Naive thymus-derived CD4-positive, alpha-beta T cell (primary cell): ENCODE measurements at regions of chr6 and their contacts with region 1.

Region 1: DNA sequence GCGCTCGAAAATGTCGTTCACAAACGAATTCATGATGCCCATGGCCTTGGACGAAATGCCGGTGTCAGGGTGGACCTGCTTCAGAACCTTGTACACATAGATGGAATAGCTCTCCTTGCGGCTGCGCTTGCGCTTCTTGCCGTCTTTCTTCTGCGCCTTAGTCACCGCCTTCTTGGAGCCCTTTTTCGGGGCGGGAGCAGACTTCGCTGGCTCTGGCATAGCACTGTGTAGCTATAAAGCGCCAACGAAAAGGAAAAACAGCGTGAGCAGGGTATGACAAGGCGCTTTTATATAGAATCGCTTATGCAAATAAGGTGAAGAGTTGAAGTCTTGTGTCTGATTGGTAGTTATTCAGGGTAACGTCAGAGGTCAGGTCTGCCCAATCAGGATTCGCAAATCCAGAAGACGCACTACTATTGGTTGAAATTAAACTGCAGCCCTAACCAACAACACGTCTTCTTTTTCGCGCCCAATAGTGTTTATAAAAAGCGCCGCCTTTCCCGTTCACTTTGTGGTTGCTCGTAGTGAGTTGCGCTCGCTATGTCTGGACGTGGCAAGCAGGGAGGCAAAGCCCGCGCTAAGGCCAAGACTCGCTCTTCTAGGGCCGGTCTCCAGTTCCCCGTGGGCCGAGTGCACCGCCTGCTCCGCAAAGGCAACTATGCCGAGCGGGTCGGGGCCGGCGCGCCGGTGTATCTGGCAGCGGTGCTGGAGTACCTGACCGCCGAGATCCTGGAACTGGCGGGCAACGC is 114.8 kb upstream of the PRSS16 start:
- DNase-seq: peak; percentile 73 to 99 (median 97)
- ATAC-seq: peak; percentile 93
- H3K4me3 ChIP-seq: peak overlapping the region; percentile 90
- H3K4me3 Mint-ChIP-seq: no peak overlapping the region
- H3K27ac ChIP-seq: peak overlapping the region; percentile 81
- H3K27ac Mint-ChIP-seq: no peak overlapping the region
- H3K4me1 ChIP-seq: peaks cover 10 to 18% of the 10 kb centered on the region in 2 donors
- H3K4me1 Mint-ChIP-seq: peaks cover 6 to 49% (median 21%) of the 10 kb centered on the region in 7 donors
- H3K27me3 ChIP-seq: no peaks in the 10 kb centered on the region
- H3K27me3 Mint-ChIP-seq: no peaks in the 10 kb centered on the region

Region 2: DNA sequence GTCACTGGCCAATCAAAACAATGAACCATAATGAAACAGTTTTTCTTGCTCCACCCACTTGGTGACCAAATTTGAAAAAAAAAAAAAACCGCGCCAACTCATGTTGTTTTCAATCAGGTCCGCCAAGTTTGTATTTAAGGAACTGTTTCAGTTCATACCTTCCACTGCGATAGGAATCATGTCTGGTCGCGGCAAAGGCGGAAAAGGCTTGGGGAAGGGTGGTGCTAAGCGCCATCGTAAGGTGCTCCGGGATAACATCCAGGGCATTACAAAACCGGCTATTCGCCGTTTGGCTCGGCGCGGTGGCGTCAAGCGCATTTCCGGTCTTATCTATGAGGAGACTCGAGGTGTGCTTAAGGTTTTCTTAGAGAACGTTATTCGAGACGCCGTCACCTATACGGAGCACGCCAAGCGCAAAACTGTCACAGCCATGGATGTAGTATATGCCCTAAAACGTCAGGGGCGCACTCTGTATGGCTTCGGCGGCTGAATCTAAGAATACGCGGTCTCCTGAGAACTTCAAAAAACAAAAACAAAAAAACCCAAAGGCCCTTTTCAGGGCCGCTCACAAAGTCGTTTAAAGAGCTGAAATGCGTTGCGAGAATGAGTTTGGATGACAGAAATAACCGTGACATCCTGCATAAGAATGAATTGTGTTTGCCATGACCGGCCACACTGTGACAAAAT is 1028.8 kb before region 1 on chr6:
- CTCF ChIA-PET with region 1: no interaction called
- POLR2A ChIA-PET with region 1: no interaction called
- intact Hi-C with region 1: loop called in 1 of 2 experiments (anchors 5 kb)
- DNase-seq: peak; percentile 83 to 96 (median 95)
- ATAC-seq: peak; percentile 94
- H3K4me3 ChIP-seq: peak overlapping the region; percentile 40
- H3K4me3 Mint-ChIP-seq: peak overlapping the region; percentile 81 to 97 (median 89)
- H3K27ac ChIP-seq: peak overlapping the region; percentile 75
- H3K27ac Mint-ChIP-seq: peak overlapping the region; percentile 96 to 100 (median 98)
- H3K4me1 ChIP-seq: peaks cover 4 to 12% of the 10 kb centered on the region in 2 donors
- H3K4me1 Mint-ChIP-seq: peaks cover 7 to 25% (median 22%) of the 10 kb centered on the region in 7 donors
- H3K27me3 ChIP-seq: no peaks in the 10 kb centered on the region
- H3K27me3 Mint-ChIP-seq: peaks cover 0 to 3% (median 0%) of the 10 kb centered on the region in 5 donors

Region 3: DNA sequence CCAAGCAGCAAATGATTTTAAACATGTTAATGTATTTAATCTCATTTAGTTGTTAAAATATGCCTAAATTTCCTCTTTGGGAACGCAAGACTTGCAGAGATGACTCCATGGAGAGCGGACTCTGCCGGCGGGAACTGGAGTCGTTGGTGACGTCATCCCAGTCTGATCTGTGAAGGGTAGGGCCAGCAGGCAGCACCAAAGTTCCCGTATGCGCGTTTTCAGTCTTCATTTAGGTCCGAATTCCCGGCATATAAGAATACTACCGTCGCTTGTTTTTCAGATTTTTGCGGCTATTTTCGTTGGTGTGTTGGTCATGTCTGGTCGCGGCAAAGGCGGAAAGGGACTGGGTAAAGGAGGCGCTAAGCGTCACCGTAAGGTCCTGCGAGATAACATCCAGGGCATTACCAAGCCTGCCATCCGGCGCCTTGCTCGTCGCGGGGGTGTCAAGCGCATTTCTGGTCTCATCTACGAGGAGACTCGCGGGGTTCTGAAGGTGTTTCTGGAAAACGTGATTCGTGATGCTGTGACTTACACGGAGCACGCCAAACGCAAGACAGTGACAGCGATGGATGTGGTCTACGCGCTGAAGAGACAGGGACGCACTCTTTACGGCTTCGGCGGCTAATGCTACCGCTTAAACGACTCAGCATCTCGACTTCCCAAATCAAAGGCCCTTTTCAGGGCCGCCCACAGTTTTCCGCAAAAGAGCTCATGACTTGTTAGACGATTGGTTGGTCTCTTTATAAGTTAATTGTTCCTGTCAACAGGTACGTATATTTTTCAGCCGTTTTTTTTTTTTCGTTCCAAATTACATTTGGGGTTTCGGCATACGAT is 928.2 kb before region 1 on chr6:
- CTCF ChIA-PET with region 1: interaction called, 3 read pairs
- POLR2A ChIA-PET with region 1: interaction called, 61 read pairs
- intact Hi-C with region 1: loop called in 1 of 2 experiments (anchors 2 kb)
- DNase-seq: peak; percentile 67 to 95 (median 89)
- ATAC-seq: peak; percentile 72
- H3K4me3 ChIP-seq: peak overlapping the region; percentile 77
- H3K4me3 Mint-ChIP-seq: no peak overlapping the region
- H3K27ac ChIP-seq: peak overlapping the region; percentile 90
- H3K27ac Mint-ChIP-seq: no peak overlapping the region
- H3K4me1 ChIP-seq: peaks cover 20 to 23% of the 10 kb centered on the region in 2 donors
- H3K4me1 Mint-ChIP-seq: peaks cover 9 to 36% (median 26%) of the 10 kb centered on the region in 7 donors
- H3K27me3 ChIP-seq: no peaks in the 10 kb centered on the region
- H3K27me3 Mint-ChIP-seq: peaks cover 0 to 5% (median 0%) of the 10 kb centered on the region in 5 donors

Region 4: DNA sequence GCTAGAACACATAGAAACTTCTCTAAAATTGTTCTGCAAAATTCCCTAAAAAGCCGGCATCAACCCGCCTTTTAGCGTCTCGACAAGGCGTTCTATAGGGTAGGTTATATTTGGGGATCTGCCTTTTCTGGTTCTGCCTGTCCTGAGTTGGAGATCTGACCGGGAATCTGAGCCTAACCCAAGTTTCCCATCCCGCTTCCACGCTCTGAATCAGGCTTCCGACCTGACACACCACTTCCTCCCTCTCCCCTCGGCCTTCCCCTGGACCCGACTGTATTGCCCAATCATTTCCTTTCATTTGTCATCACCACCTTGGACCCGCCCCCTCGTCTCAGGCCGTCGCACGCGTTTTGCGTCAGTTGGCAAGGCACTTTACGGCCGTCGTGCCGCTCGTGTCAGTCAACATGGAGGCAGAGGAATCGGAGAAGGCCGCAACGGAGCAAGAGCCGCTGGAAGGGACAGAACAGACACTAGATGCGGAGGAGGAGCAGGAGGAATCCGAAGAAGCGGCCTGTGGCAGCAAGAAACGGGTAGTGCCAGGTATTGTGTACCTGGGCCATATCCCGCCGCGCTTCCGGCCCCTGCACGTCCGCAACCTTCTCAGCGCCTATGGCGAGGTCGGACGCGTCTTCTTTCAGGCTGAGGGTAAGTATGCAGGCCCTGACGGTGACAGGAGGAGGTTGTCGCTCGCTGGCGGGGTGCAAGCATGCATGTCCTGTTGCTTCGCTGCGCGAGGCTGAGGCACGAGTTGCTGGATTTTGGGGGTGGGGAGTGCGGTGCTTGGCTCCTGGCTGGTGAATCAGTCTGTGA is 535.9 kb before region 1 on chr6 and contains the start of gene ABT1:
- CTCF ChIA-PET with region 1: no interaction called
- POLR2A ChIA-PET with region 1: interaction called, 3 read pairs
- intact Hi-C with region 1: loop called in 1 of 2 experiments (anchors 5 kb)
- DNase-seq: peak; percentile 87 to 96 (median 95)
- ATAC-seq: peak; percentile 95
- H3K4me3 ChIP-seq: peak within 1 kb of the TSS; percentile 81
- H3K4me3 Mint-ChIP-seq: no peak within 1 kb of the TSS
- H3K27ac ChIP-seq: peak within 1 kb of the TSS; percentile 89
- H3K27ac Mint-ChIP-seq: peak within 1 kb of the TSS in 1 of 9 donors; percentile 92
- H3K4me1 ChIP-seq: peaks cover 17 to 22% of the 10 kb centered on the region in 2 donors
- H3K4me1 Mint-ChIP-seq: peaks cover 5 to 20% (median 10%) of the 10 kb centered on the region in 7 donors
- H3K27me3 ChIP-seq: peaks cover 8 to 14% of the 10 kb centered on the region in 2 donors
- H3K27me3 Mint-ChIP-seq: peaks cover 3 to 28% (median 16%) of the 10 kb centered on the region in 5 donors
- total RNA-seq, gene ABT1: 23.3 to 37.5 (median 35.0) TPM

Region 5: DNA sequence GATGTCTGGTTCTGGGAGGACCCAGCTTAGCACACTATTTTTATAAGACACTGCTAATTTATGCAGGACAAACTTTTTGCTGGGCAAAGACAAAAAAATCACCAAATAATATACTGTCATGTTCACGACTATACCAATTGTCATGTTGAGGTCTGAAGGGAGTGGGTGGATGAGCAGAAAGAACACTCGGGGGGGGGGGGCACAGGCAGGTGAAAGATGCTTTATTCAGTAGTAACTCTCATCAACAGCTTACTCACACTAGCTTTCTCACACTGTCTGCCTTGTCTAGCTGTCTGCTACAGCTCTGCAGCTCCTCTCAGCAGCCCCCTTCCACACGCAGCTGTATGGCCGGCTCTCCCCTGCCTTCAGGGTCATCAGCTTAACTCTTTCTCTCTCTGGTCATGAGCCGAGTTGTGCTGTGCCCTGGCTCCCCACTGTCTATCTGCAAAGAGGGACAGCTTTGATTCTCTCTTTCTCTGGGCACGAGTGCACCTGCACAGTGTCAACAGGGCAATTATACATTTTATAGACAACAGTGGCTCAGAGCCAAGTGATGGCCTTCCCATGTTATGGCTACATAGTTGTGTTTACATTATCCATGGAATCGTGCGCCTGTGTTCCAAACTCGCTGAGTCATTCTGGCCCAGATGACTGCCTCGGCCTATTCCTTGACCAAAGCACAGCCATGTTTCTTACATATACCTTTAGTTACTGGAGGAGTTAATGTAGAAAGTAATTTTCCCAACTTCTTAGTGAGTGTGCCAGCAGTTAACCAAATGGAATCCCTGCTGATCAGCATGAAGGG is 72.9 kb before region 1 on chr6:
- CTCF ChIA-PET with region 1: no interaction called
- POLR2A ChIA-PET with region 1: no interaction called
- intact Hi-C with region 1: no loop called
- DNase-seq: no peak
- ATAC-seq: no peak
- H3K4me3 ChIP-seq: no peak overlapping the region
- H3K4me3 Mint-ChIP-seq: no peak overlapping the region
- H3K27ac ChIP-seq: no peak overlapping the region
- H3K27ac Mint-ChIP-seq: no peak overlapping the region
- H3K4me1 ChIP-seq: no peaks in the 10 kb centered on the region
- H3K4me1 Mint-ChIP-seq: no peaks in the 10 kb centered on the region
- H3K27me3 ChIP-seq: no peaks in the 10 kb centered on the region
- H3K27me3 Mint-ChIP-seq: peaks cover 9 to 32% (median 17%) of the 10 kb centered on the region in 5 donors

Region 6: GRCh38 chr6:27076116-27076515 is 56.6 kb before region 1 on chr6:
- CTCF ChIA-PET with region 1: no interaction called
- POLR2A ChIA-PET with region 1: no interaction called
- intact Hi-C with region 1: no loop called
- DNase-seq: no peak
- ATAC-seq: no peak
- H3K4me3 ChIP-seq: no peak overlapping the region
- H3K4me3 Mint-ChIP-seq: no peak overlapping the region
- H3K27ac ChIP-seq: no peak overlapping the region
- H3K27ac Mint-ChIP-seq: no peak overlapping the region
- H3K4me1 ChIP-seq: no peaks in the 10 kb centered on the region
- H3K4me1 Mint-ChIP-seq: peaks cover 0 to 8% (median 7%) of the 10 kb centered on the region in 7 donors
- H3K27me3 ChIP-seq: peaks cover 0 to 11% of the 10 kb centered on the region in 2 donors
- H3K27me3 Mint-ChIP-seq: peaks cover 19 to 54% (median 37%) of the 10 kb centered on the region in 5 donors

Region 7: DNA sequence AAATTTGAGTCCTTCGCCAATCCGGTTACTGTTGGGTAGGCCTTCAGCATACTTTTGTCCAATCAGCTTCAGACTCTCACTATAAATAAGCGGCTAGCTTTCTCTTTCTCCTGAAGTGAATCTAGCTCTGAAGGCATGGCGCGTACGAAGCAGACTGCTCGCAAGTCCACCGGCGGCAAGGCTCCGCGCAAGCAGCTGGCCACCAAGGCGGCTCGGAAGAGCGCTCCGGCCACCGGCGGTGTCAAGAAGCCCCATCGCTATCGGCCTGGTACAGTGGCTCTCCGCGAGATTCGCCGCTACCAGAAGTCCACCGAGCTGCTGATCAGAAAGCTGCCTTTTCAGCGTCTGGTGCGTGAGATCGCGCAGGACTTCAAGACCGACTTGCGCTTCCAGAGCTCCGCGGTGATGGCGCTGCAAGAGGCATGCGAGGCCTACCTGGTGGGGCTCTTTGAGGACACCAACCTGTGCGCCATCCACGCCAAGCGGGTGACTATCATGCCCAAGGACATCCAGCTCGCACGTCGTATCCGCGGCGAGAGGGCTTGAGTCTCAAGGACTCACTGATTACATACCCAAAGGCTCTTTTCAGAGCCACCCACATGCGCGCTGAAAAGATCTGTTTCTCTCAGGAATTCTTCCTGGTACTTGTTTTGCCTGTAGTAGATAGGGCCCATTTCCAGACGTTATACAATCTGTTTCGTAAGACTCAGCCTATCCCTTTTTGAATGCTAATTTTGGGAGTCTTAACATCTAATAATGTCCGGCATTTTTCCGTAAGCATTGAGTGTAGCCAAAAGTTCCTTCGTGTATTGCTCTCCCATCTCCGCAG is 677.4 kb after region 1 on chr6:
- CTCF ChIA-PET with region 1: interaction called, 5 read pairs
- POLR2A ChIA-PET with region 1: interaction called, 114 read pairs
- intact Hi-C with region 1: loop called (anchors 1 kb)
- DNase-seq: peak; percentile 66 to 96 (median 92)
- ATAC-seq: peak; percentile 71
- H3K4me3 ChIP-seq: peak overlapping the region; percentile 76
- H3K4me3 Mint-ChIP-seq: peak overlapping the region; percentile 81 to 97 (median 94)
- H3K27ac ChIP-seq: peak overlapping the region; percentile 86
- H3K27ac Mint-ChIP-seq: peak overlapping the region; percentile 95 to 99 (median 98)
- H3K4me1 ChIP-seq: peaks cover 20 to 42% of the 10 kb centered on the region in 2 donors
- H3K4me1 Mint-ChIP-seq: peaks cover 18 to 82% (median 61%) of the 10 kb centered on the region in 7 donors
- H3K27me3 ChIP-seq: no peaks in the 10 kb centered on the region
- H3K27me3 Mint-ChIP-seq: peaks cover 0 to 9% (median 0%) of the 10 kb centered on the region in 5 donors

Region 8: DNA sequence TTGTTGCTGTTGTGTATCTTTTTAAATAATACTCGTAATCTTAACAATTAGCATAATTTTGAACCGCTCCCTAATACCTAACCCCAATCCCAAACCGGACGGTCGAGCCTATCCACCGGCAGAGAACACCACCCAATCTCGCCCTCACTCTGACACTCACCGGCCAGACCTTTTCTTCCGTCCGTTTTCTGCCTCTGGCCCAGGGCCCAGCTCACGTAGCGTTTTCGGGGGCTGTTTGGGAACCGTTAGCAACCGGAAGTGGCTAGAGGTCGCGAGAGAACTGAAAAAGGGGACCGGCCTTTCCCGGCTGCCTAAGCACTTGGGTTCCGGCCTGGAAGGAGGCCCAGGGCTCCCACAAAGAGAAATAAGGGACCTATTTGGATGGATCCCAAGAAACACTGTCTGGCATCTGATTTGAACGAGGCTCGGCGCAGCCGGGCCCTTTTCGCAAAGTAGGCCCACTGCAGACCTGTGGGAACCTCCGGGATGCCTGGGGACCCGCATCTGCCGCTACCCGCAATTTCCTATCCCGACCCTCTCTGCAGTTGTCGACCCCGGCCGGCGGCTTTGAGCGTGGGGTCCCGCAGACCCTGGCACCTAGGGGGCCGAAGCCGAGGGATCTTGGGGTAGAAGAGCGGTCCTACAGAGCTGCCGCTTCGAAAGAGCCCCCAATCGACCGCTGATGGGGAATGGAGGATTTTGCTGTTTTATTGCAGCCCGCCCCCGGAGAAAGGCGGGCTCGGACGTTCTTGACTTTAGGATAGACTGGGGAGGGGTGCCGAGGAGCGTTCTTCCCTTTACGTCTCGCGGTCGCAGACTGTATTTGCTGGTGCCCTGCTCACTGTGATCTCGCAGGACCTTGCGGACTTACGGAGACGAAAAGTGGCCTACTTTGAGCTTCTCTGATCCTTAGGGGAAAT is 1004.1 kb after region 1 on chr6:
- CTCF ChIA-PET with region 1: no interaction called
- POLR2A ChIA-PET with region 1: no interaction called
- intact Hi-C with region 1: loop called in 1 of 2 experiments (anchors 5 kb)
- DNase-seq: peak; percentile 45 to 72 (median 56)
- ATAC-seq: peak; percentile 56
- H3K4me3 ChIP-seq: peak overlapping the region; percentile 89
- H3K4me3 Mint-ChIP-seq: peak overlapping the region; percentile 91 to 100 (median 94)
- H3K27ac ChIP-seq: peak overlapping the region; percentile 98
- H3K27ac Mint-ChIP-seq: peak overlapping the region; percentile 91 to 100 (median 97)
- H3K4me1 ChIP-seq: peaks cover 10 to 19% of the 10 kb centered on the region in 2 donors
- H3K4me1 Mint-ChIP-seq: peaks cover 31 to 78% (median 72%) of the 10 kb centered on the region in 7 donors
- H3K27me3 ChIP-seq: no peaks in the 10 kb centered on the region
- H3K27me3 Mint-ChIP-seq: no peaks in the 10 kb centered on the region